Right cardiac atrium (tissue), 5 donors: ENCODE measurements at regions of chr16 and their contacts with region 1.

Region 1: GRCh38 chr16:21184834-21185233 is 26.4 kb downstream of the LDAF1 start:
- DNase-seq: no peak
- ATAC-seq: no peak
- H3K4me3 ChIP-seq: no peak overlapping the region
- H3K27ac ChIP-seq: no peak overlapping the region
- H3K4me1 ChIP-seq: no peaks in the 10 kb centered on the region
- H3K27me3 ChIP-seq: no peaks in the 10 kb centered on the region

Region 2: DNA sequence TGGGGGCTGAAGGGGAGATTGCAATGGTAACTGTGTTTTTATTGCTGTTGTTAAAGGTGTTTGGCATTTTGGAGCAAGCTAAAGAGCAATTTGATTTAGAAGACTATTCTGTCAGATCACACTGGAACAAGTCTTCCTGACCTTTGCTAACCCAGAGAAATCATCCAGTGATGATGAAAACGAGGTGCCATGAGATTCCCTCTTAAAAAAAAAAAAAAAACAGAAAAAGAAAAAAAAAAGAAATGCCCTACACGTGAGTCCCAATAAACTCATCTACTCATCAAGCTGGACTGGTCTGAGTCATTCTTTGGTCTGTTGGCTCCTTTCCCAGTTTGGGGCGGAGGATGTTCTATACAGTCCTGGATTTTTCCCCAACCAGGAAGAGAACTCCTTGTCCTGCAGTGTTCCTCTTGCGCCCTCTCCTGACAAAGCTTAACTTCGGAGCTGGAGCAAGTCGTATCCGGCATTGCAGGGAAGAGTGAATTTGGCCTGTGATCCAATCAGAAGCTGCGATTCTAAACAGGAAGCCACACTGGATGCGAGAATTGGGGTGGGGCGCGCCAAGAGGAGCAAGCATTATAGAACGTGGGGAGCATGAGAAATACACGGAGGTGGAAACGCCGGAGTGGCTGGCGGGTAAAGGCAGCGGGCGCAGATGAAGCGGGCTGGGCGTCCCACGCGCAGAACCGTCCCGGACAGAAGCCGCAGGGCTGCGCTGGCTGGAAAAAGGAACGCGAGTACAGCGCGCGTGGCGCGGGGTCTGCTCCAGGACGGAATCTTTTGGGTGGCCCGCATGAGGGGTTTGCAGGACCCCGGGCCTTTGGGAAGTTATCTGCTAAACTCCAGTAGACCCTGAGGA is 115.7 kb after region 1 on chr16:
- intact Hi-C with region 1: loop called (anchors 2 to 10 kb)
- DNase-seq: peak; percentile 90 to 95 (median 94)
- ATAC-seq: peak; percentile 96 to 98
- H3K4me3 ChIP-seq: peak overlapping the region; percentile 43
- H3K27ac ChIP-seq: peak overlapping the region; percentile 55
- H3K4me1 ChIP-seq: no peaks in the 10 kb centered on the region
- H3K27me3 ChIP-seq: no peaks in the 10 kb centered on the region